Activated CD4-positive, alpha-beta T cell treated with anti-CD3 and anti-CD28 coated beads for 36 hours (primary cell): ENCODE measurements at regions of chr14 and their contacts with region 1.

Region 1: DNA sequence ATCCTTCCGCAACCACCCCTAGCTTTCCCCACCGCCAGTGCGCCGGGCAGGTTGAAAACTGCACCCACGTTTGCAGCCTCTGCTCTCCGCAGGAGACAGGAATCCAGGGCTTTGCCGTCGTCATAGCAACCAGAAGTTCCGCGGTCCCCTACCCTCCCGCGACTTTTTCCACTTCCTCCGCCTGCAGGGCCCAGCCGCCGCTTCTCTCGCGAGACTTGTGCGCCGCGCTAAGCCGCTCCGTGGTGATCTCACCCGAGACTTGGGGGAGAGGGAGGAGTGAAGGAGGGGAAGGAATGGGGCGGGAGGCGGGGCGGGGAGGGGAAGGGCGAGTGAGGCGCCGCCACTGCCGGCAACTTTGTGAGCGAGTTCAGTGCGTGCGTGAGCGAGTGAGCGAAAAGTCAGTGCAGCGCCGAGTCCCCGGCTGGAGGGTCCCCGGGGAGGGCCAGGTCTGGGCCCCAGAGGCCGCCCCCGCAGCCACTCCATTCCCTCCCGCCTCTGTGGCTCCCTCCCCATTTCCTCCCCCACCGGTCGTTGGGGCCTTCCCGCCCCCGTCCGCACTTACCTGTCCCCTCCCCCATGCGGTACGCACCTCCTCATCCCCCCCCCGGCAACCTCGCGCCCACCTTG is 413.0 kb downstream of the PCNX1 start:
- DNase-seq: peak; percentile 99
- ATAC-seq: peak; percentile 87
- H3K4me3 Mint-ChIP-seq: peak within 1 kb of the TSS; percentile 92
- H3K27ac Mint-ChIP-seq: peak within 1 kb of the TSS; percentile 89
- H3K4me1 Mint-ChIP-seq: peaks cover 39% of the 10 kb centered on the region
- H3K27me3 Mint-ChIP-seq: no peaks in the 10 kb centered on the region

Region 2: DNA sequence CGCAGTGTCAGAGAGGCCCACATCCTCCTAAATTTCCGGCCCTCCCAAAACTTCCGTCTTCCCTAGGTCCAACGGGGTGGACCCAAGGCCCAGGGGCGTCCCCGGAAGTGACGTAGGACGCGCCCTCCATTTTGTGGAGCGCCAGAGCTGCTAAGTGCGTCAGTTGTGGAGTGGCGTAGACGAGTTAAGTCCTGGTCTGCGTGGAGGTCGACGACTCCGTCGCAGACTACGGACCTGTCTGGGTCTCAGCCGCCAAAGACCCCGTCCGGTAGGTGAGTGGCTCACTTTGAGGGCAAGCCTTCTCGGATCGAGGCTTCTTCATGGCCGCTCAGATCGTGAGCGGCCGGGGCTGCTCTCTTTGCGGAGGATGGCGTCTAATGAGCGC is 1553.2 kb before region 1 on chr14 and contains the start of gene SRSF5:
- CTCF ChIA-PET with region 1: no interaction called
- POLR2A ChIA-PET with region 1: no interaction called
- intact Hi-C with region 1: loop called in 1 of 2 experiments (anchors 10 kb)
- DNase-seq: peak; percentile 96
- ATAC-seq: peak; percentile 76
- H3K4me3 Mint-ChIP-seq: peak within 1 kb of the TSS; percentile 96
- H3K27ac Mint-ChIP-seq: peak within 1 kb of the TSS; percentile 99
- H3K4me1 Mint-ChIP-seq: peaks cover 77% of the 10 kb centered on the region
- H3K27me3 Mint-ChIP-seq: no peaks in the 10 kb centered on the region
- total RNA-seq, gene SRSF5: 265 to 319 TPM

Region 3: DNA sequence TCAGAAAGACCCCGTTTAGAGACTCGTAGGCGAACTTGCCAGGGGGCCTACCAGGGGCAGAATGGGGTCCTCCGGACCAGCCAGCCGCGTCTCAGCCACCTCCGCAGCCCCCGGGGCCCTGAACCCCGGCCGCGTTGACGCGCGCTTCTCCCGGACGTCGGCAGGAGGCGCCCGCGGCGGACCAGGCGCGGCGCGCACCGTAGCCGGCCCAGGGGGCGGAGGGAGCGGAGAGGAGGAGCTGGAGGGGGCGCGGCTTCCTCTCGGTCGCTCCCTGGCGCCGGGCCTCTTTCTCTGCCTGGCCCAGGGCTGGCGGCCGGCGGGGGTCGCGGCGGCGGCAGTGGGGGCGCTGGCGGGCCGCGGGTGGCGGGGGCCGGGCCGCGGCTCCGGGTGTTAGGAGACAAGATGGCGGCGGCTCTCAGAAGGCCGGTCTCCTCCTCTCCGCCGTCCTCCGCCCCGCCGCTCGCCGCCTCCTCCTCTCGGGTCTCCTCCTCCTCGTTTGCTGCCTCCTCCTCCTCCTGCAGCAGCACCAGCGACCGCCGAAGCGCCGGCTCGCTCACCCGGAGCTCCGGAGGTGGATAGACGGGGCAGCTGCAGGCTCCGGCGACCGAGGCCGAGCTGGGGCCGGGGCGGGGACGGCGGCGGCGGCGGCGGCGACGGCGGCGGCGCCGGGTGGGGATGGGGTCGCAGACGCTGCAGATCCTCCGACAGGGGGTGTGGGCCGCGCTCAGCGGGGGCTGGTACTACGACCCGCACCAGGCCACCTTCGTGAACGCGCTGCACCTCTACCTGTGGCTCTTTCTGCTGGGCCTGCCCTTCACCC is 412.8 kb before region 1 on chr14 and contains the start of gene PCNX1:
- CTCF ChIA-PET with region 1: no interaction called
- POLR2A ChIA-PET with region 1: no interaction called
- intact Hi-C with region 1: loop called in 1 of 2 experiments (anchors 2 kb)
- DNase-seq: peak; percentile 93
- ATAC-seq: peak; percentile 73
- H3K4me3 Mint-ChIP-seq: peak within 1 kb of the TSS; percentile 96
- H3K27ac Mint-ChIP-seq: peak within 1 kb of the TSS; percentile 94
- H3K4me1 Mint-ChIP-seq: peaks cover 70% of the 10 kb centered on the region
- H3K27me3 Mint-ChIP-seq: no peaks in the 10 kb centered on the region
- total RNA-seq, gene PCNX1: 38.4 to 57.9 TPM

Region 4: GRCh38 chr14:71221119-71221518 is 99.1 kb before region 1 on chr14:
- CTCF ChIA-PET with region 1: no interaction called
- POLR2A ChIA-PET with region 1: no interaction called
- intact Hi-C with region 1: loop called (anchors 1 kb)
- DNase-seq: no peak
- ATAC-seq: no peak
- H3K4me3 Mint-ChIP-seq: no peak overlapping the region
- H3K27ac Mint-ChIP-seq: no peak overlapping the region
- H3K4me1 Mint-ChIP-seq: peaks cover 15% of the 10 kb centered on the region
- H3K27me3 Mint-ChIP-seq: no peaks in the 10 kb centered on the region

Region 5: DNA sequence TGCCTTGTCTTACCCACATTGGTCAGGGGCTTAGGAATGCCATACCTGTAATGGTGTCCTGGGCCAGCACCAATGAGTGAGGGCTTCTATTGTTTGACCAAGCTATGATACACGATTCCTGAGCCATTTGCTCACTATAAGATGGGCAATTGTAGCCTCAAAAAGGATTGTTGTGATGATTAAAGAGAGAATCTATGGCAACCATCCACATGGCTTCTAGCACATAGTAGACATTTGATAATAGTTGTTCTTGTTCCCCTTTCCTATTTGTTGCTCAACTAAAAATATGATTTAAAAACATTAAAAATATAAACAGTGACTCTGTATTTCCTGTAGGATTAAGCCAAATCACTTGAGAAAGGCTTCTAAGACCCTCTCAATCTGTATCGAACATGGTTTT is 46.9 kb before region 1 on chr14:
- CTCF ChIA-PET with region 1: no interaction called
- POLR2A ChIA-PET with region 1: no interaction called
- intact Hi-C with region 1: no loop called
- DNase-seq: no peak
- ATAC-seq: no peak
- H3K4me3 Mint-ChIP-seq: no peak overlapping the region
- H3K27ac Mint-ChIP-seq: no peak overlapping the region
- H3K4me1 Mint-ChIP-seq: peaks cover 6% of the 10 kb centered on the region
- H3K27me3 Mint-ChIP-seq: peaks cover 2% of the 10 kb centered on the region

Region 6: DNA sequence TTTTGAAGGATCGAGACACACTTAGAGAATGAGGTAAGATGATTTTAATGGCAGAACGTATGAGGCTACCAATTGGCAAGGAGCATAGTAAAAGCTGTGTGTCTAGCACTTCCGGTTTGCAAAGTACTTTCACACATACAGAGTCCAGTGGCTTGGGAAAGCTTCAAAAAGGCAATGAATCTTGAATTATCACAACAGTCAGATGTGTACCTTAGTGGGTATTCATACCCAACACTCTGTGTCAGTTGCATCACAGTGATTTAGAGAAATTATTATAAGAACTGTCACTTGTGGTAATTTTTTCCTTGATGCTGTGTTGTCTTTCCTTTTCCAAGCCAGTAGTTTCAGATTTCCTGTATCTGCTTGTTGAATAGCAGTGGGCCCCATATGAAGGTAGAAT is 11.2 kb after region 1 on chr14:
- CTCF ChIA-PET with region 1: interaction called, 5 read pairs
- POLR2A ChIA-PET with region 1: interaction called, 17 read pairs
- intact Hi-C with region 1: loop called in 1 of 2 experiments (anchors 1 kb)
- DNase-seq: no peak
- ATAC-seq: peak; percentile 17
- H3K4me3 Mint-ChIP-seq: no peak overlapping the region
- H3K27ac Mint-ChIP-seq: peak overlapping the region; percentile 69
- H3K4me1 Mint-ChIP-seq: peaks cover 70% of the 10 kb centered on the region
- H3K27me3 Mint-ChIP-seq: no peaks in the 10 kb centered on the region

Region 7: DNA sequence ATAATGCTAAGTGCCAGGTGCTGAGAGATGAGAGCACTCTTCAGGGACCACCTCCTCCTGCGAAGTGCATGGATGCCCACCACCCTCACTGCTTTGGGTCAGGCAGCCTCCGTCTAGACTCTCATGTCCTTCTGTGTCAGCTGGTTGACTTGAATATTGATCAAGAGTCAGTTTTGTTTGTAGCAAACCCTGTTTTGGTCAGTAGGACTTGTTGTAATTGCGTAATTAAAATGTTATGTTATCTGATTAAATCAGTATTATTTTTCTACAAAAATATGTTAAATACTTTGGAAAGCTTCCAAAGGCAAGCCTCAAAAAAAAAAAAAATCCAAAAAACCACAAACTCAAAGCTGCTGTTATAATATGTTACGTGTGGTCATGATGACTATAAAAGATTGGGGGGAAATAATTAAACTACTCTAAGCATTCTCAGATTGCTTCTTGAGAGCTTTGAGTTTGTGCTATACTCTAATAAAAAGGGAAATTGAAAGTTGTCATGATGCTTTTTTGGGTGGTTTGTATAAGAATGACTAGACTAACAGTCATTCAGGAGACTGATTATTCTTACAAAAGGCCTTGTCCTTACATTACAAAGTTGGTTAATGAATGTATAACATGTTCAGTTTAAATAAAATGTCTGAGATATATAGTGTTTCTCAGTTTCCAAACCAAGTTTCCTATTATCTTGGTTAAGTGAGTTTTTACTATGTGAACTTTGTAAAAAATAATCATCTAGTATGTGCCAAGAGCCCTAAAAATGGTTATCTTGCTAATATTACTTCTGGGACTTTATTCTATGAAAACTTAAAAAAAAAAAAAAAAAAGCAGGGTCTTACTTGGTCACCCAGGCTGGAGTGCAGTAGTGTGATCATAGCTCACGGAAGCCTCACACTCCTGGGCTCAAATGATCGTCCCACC is 152.1 kb after region 1 on chr14:
- CTCF ChIA-PET with region 1: no interaction called
- POLR2A ChIA-PET with region 1: interaction called, 5 read pairs
- intact Hi-C with region 1: loop called (anchors 2 to 5 kb)
- DNase-seq: no peak
- ATAC-seq: peak; percentile 79
- H3K4me3 Mint-ChIP-seq: no peak overlapping the region
- H3K27ac Mint-ChIP-seq: no peak overlapping the region
- H3K4me1 Mint-ChIP-seq: peaks cover 41% of the 10 kb centered on the region
- H3K27me3 Mint-ChIP-seq: no peaks in the 10 kb centered on the region

Region 8: GRCh38 chr14:72104011-72104613 is 783.9 kb after region 1 on chr14:
- CTCF ChIA-PET with region 1: no interaction called
- POLR2A ChIA-PET with region 1: no interaction called
- intact Hi-C with region 1: no loop called
- DNase-seq: peak; percentile 75
- ATAC-seq: peak; percentile 64
- H3K4me3 Mint-ChIP-seq: no peak overlapping the region
- H3K27ac Mint-ChIP-seq: no peak overlapping the region
- H3K4me1 Mint-ChIP-seq: no peaks in the 10 kb centered on the region
- H3K27me3 Mint-ChIP-seq: peaks cover 7% of the 10 kb centered on the region